ENCODE measurements at regions of chr21 and their contacts with region 1.

Region 1: DNA sequence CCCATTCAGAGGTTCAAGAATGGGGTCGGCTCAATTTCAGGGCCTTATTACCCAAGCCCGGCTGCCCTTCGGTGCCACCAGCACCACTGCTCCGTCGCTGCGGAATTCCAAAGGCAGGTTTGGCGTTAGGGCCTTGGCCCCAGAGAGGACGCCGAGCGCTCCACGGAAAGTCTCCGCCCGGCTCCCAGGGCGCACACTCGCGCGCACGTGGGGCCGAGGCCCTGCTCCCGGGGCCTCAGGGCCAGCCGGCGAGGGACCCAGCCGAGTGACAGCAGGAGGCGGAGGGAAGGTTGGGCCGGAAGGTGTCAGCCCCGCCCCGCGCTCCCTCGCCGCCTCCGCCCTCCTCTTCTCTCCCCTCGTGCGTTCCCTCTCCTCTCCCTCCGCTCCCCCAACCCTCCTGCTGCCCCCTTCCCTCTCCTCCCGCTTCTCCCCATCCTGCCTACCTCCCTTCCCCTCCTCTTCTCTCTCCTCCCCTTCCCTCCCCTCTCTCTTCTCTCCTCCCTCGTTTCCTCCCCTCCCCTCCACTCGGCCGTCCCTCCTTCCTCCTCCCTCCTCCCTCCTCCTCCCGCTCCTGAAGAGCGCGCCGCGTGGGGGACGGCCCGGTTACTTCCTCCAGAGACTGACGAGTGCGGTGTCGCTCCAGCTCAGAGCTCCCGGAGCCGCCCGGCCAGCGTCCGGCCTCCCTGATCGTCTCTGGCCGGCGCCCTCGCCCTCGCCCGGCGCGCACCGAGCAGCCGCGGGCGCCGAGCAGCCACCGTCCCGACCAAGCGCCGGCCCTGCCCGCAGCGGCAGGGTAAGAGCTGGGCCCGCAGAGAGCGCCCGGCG is at the start of gene ETS2:
- DNase-seq: peak; percentile 89 to 93 (median 92)
- H3K4me3 ChIP-seq: peak within 1 kb of the TSS; percentile 97
- H3K27ac ChIP-seq: peak within 1 kb of the TSS; percentile 93 to 96
- H3K4me1 ChIP-seq: peaks cover 4% of the 10 kb centered on the region
- H3K27me3 ChIP-seq: no peaks in the 10 kb centered on the region
- CTCF ChIP-seq: no peak
- EP300 ChIP-seq: no peak
- POLR2A ChIP-seq: peak; percentile 89
- total RNA-seq, gene ETS2: 57.5 to 152 (median 79.6) TPM

Region 2: DNA sequence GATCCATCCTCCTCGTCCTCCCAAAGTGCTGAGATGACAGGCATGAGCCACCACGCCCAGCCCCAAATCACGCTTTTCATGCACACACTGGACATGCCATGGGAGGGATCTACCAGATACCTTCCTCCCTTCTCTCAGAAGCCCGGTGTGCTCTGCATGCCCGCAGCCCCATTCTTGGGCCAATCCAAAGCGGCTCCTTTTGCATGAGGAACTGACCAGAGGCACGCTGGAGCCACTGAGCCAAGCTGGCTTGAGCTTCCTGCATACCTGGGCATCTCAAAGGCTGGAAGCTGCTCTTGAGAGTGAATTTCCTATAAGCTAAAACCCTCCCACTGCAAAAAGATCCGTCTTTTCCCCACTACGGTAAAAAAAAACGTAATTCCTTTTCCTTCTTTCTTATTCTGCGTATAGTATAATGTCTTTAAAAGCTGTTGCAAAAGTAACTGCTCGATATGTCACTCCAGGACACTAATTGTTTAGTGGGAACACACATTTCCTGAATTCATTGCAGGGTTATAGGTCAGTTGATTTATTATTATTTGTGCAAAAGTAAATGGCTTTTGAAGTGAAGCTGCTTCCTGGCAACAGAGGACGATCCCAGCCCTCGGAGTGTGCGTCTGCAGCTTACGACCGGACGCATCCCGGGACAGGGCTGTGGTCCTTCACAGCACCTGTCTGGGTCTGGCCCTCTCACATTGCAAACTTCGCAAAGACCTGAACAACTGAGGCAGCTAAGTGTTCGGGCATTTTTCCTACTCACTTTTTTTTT is 61.6 kb before region 1 on chr21:
- intact Hi-C with region 1: loop called in 3 of 4 experiments (anchors 10 kb)
- DNase-seq: no peak
- H3K4me3 ChIP-seq: no peak overlapping the region
- H3K27ac ChIP-seq: no peak overlapping the region
- H3K4me1 ChIP-seq: no peaks in the 10 kb centered on the region
- H3K27me3 ChIP-seq: no peaks in the 10 kb centered on the region
- CTCF ChIP-seq: no peak
- EP300 ChIP-seq: no peak
- POLR2A ChIP-seq: no peak

Region 3: GRCh38 chr21:38888991-38889561 is 83.5 kb after region 1 on chr21:
- intact Hi-C with region 1: no loop called
- DNase-seq: no peak
- H3K4me3 ChIP-seq: no peak overlapping the region
- H3K27ac ChIP-seq: peak overlapping the region in 1 of 2 donors; percentile 31
- H3K4me1 ChIP-seq: no peaks in the 10 kb centered on the region
- H3K27me3 ChIP-seq: no peaks in the 10 kb centered on the region
- CTCF ChIP-seq: no peak
- EP300 ChIP-seq: no peak
- POLR2A ChIP-seq: no peak

Region 4: GRCh38 chr21:38903690-38904139 is 98.2 kb after region 1 on chr21:
- intact Hi-C with region 1: loop called in 2 of 4 experiments (anchors 5 to 10 kb)
- DNase-seq: no peak
- H3K4me3 ChIP-seq: no peak overlapping the region
- H3K27ac ChIP-seq: no peak overlapping the region
- H3K4me1 ChIP-seq: peaks cover 5% of the 10 kb centered on the region
- H3K27me3 ChIP-seq: no peaks in the 10 kb centered on the region
- CTCF ChIP-seq: no peak
- EP300 ChIP-seq: no peak
- POLR2A ChIP-seq: no peak

Region 5: GRCh38 chr21:38925923-38926322 is 120.4 kb after region 1 on chr21:
- intact Hi-C with region 1: loop called in 1 of 4 experiments (anchors 5 kb)
- DNase-seq: peak; percentile 72 to 80 (median 75)
- H3K4me3 ChIP-seq: no peak overlapping the region
- H3K27ac ChIP-seq: peak overlapping the region; percentile 47 to 64
- H3K4me1 ChIP-seq: peaks cover 5% of the 10 kb centered on the region
- H3K27me3 ChIP-seq: no peaks in the 10 kb centered on the region
- CTCF ChIP-seq: no peak
- EP300 ChIP-seq: no peak
- POLR2A ChIP-seq: no peak

Region 6: DNA sequence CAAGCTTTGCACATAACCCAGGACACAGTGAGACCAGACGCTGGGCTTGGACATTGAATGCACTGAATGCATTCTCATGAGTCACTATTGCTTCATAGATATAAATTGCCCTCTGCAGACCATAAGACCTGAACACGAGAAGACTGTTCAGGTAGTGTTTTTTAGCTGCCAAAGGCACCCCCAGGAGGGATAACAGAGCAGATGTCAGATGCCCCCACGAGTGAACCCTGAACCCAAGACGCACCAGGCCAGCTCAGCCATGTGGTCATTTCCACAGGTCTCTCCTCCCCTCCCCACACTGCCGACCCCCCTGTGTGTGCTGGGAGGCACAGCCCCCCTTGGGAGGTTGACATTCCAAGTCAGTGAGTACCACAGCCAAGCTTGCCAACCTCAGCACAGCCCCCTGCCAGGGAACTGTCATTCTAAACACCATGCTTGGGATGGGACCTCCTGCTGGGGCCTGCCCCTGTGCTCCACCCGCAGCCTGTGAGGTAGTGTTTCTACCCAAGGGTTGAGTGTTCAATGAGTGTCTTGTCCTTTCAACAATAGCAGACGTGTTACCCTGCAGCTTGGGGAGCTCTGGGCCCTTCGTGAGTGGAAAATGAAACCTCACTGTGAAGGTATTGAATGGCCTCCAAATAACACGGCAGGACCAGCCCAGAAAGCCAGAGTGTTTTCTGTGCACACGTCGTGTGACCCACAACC is 309.5 kb after region 1 on chr21:
- intact Hi-C with region 1: loop called in 2 of 4 experiments (anchors 10 kb)
- DNase-seq: no peak
- H3K4me3 ChIP-seq: no peak overlapping the region
- H3K27ac ChIP-seq: no peak overlapping the region
- H3K4me1 ChIP-seq: peaks cover 2% of the 10 kb centered on the region
- H3K27me3 ChIP-seq: no peaks in the 10 kb centered on the region
- CTCF ChIP-seq: no peak
- EP300 ChIP-seq: no peak
- POLR2A ChIP-seq: no peak

Region 7: DNA sequence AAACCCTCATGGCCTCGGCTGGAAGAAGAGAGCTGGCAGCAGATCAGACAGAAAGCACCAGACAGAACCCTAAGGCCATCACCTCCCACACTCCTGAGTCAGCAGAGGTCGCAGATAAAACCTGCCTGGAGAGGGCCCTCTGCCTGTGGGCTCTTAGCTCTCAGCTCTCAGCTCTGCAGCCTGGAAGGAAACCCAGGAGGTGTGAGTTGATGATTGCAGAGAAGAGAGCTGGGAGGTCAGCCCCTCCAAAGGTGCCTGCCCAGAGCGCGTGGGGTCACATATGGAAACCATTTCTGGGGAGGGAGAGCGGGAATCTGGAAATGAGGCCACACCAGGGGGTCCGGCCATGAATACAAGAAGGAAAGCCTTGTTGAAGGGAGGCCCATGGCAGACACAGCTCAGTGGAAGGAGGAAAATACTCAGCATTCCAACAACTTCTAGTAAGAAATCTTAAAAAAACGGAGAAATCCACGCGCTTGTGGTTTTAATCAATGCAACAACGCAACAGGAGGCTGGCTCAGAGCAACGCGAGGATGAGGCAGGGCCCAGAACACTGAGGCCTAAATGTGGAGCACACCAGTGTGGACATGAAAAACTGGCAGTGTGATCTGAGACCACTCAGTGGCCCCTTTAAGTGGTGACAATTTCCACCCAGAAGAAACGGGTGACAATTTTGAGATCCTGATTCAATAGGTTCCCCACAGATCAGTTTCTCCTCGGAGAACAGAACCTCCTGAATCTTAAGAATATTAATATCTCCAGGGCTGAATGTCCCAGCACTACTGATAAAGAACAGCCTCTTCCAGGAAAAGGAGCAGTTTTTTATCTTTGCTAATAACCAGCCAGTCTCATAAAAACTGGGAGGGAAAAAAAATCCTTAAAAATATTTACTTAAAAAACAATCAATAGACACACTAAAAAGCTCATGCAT is 332.0 kb after region 1 on chr21:
- intact Hi-C with region 1: loop called in 1 of 4 experiments (anchors 5 kb)
- DNase-seq: peak in 4 of 5 donors; percentile 42 to 68 (median 54)
- H3K4me3 ChIP-seq: no peak overlapping the region
- H3K27ac ChIP-seq: peak overlapping the region; percentile 19 to 56
- H3K4me1 ChIP-seq: no peaks in the 10 kb centered on the region
- H3K27me3 ChIP-seq: no peaks in the 10 kb centered on the region
- CTCF ChIP-seq: no peak
- EP300 ChIP-seq: no peak
- POLR2A ChIP-seq: no peak

Region 8: GRCh38 chr21:39852021-39852721 is 1046.6 kb after region 1 on chr21:
- intact Hi-C with region 1: no loop called
- DNase-seq: no peak
- H3K4me3 ChIP-seq: no peak overlapping the region
- H3K27ac ChIP-seq: no peak overlapping the region
- H3K4me1 ChIP-seq: no peaks in the 10 kb centered on the region
- H3K27me3 ChIP-seq: no peaks in the 10 kb centered on the region
- CTCF ChIP-seq: no peak
- EP300 ChIP-seq: no peak
- POLR2A ChIP-seq: no peak

Measured in ovary (tissue), 10 donors.